Ascending aorta (tissue), 2 donors: ENCODE measurements at regions of chr10 and their contacts with region 1.

Region 1: DNA sequence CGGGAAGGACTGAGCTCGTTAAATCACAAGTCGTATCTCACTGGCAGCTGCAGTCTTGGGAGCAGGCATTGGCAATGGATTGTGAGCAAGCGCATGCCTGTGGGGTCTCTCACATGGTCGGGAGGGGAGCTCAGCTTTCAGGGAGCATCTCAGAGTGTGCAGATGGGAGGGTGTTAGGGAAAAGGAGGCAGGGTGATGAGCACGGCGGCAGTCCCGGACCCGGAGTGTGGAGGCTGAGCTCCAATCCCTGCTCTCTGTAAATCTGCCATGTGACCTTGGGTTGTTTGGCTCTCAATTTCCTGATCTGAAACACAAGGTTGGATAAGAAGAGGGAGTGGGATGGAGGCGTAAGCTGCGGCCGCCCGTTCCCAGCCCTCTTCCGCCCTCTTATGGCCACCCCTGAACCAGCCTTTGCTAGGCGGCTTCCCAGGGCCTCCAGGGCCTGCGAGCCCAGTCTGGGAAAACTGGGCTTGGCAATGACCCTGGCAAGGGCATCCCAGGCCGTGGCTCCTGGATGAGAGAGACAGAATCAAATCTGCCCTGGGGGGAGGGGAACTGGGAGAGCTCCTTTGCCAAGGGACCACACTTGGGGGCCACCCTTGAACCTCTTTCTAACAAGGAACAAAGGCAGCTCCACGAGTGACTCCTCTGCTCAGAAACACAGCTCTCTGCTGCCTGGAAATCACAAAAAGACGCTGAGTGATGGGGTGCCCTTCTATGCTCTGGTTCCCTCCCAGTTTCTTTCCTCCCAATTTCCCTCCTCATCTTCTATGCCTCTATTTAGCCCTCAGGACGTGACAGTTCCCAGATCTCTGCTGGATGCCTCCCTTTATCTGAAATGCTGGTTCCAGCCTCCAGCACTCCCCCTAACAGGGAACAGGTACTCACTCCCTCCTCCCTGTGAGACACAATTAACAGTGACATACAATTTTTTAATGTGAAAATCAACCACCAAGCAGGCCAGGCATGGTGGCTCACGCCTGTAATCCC is 41.7 kb upstream of the LOXL4 start:
- DNase-seq: peak in 1 of 2 donors; percentile 85
- H3K4me3 ChIP-seq: peak overlapping the region in 1 of 2 donors; percentile 45
- H3K27ac ChIP-seq: no peak overlapping the region
- H3K4me1 ChIP-seq: peaks cover 0 to 6% of the 10 kb centered on the region in 2 donors
- H3K27me3 ChIP-seq: no peaks in the 10 kb centered on the region
- CTCF ChIP-seq: peak; percentile 73 to 89 (median 86)

Region 2: GRCh38 chr10:96719850-96720421 is 1589.7 kb before region 1 on chr10:
- intact Hi-C with region 1: no loop called
- DNase-seq: peak in 1 of 2 donors; percentile 75
- H3K4me3 ChIP-seq: peak overlapping the region; percentile 65 to 73
- H3K27ac ChIP-seq: no peak overlapping the region
- H3K4me1 ChIP-seq: peaks cover 0 to 6% of the 10 kb centered on the region in 2 donors
- H3K27me3 ChIP-seq: no peaks in the 10 kb centered on the region
- CTCF ChIP-seq: peak in 2 of 3 experiments; percentile 7 to 37

Region 3: DNA sequence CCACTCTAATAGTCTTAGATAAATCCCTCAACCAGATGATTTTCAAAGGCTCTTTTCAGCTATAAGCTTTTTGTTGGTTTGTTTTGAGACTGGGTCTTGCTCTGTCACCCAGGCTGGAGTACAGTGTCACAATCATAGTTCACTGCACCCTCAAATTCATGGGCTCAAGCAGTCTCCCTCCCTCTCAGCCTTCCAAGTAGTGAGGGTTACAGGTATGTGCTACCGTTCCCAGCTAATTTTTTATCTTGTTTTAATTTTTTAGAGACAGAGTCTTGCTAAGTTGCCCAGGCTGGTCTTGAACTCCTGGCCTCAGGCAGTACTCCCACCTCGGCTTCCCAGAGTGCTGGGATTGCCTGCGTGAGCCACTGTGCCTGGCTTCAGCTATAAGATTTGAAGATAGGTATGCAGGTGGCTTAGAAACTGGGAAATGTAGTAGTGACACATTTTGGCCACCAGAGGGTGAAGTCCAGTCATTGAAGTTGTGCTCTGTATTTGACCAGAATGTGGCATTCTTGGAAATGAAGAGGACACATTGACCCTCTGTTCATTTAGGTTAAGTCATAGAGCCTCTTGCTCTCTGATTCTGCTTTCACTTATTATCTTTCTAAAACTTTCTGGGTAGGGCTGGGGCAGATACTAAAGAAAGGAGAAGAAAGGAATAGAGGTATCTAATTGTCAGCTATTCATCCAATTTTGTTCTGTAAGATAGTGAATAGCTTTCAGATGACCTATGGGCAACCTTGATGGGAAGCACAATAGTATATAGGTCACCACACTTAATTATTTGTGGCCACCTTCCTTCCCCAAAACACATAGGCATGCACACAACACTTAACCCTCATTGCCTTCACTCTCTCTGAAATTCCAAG is 139.2 kb before region 1 on chr10:
- intact Hi-C with region 1: loop called (anchors 1 kb)
- DNase-seq: no peak
- H3K4me3 ChIP-seq: no peak overlapping the region
- H3K27ac ChIP-seq: no peak overlapping the region
- H3K4me1 ChIP-seq: peaks cover 0 to 6% of the 10 kb centered on the region in 2 donors
- H3K27me3 ChIP-seq: no peaks in the 10 kb centered on the region
- CTCF ChIP-seq: peak; percentile 63 to 76 (median 65)

Region 4: GRCh38 chr10:98242823-98243222 is 66.8 kb before region 1 on chr10:
- intact Hi-C with region 1: loop called (anchors 1 kb)
- DNase-seq: no peak
- H3K4me3 ChIP-seq: no peak overlapping the region
- H3K27ac ChIP-seq: no peak overlapping the region
- H3K4me1 ChIP-seq: peaks cover 0 to 8% of the 10 kb centered on the region in 2 donors
- H3K27me3 ChIP-seq: no peaks in the 10 kb centered on the region
- CTCF ChIP-seq: peak in 1 of 3 experiments; percentile 58

Region 5: DNA sequence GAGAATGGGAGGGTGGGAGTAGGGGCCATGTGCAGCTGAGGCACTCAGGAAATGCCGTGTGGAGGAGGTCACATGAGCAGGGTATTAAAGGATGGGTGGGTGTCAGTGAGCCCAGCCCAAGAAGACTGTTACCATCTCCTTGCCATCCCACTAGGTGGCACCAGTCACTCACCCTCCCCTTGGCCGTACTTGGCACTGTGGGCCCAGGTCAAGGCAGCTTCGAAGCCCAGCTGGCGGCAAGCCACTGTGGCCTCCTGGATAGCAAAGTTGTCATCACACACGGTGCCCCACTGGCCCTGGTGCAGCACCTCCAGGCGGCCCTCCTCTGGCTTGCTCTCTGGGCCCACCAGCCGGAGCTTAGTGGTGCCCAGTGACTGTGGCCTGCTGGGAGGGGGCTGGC is 47.1 kb before region 1 on chr10:
- intact Hi-C with region 1: loop called (anchors 1 kb)
- DNase-seq: no peak
- H3K4me3 ChIP-seq: no peak overlapping the region
- H3K27ac ChIP-seq: peak overlapping the region in 1 of 2 donors; percentile 10
- H3K4me1 ChIP-seq: peaks cover 0 to 18% of the 10 kb centered on the region in 2 donors
- H3K27me3 ChIP-seq: no peaks in the 10 kb centered on the region
- CTCF ChIP-seq: peak; percentile 17 to 52 (median 46)